Heart right ventricle (tissue), 16 donors: ENCODE measurements at regions of chr20 and their contacts with region 1.

Region 1: DNA sequence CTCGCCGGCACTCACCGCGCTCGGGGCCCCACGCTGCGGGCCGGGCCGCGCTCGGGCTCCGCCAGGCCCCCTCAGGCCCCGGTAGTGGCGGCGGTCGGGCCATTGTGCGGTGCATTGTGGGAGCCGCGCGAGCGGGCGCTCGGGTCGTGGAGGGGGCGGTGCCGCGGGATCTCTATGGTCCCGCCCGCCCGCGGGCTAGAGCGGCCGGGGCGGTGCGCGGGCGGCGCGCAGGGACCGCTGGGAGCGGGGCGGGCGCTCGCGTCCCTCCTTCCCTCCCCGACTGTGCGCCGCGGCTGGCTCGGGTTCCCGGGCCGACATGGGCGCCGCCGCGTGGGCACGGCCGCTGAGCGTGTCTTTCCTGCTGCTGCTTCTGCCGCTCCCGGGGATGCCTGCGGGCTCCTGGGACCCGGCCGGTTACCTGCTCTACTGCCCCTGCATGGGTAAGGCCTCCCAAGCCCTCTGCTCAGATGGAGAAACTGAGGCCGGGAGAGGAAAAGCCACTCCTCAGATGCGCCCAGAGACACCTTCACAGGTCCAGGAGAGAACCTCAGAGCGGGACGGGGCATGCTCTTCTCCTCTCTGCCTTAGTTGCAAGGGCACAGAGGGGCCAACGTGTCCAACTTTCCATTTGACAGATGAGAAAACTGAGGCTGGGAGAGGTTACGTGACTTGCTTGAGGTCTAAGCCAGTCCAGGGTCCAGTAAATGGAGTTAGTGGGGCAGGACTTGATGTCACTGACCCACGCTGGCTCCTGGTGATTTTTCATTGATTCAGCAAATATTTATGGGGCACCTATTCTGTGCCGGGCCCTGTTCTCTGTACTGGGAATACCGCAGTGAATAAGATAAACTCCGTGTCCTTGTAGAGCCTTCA is at the starts of genes PLAGL2 and POFUT1:
- DNase-seq: peak; percentile 90 to 91
- ATAC-seq: peak; percentile 91 to 98 (median 95)
- H3K4me3 ChIP-seq: peak within 1 kb of the TSS; percentile 70 to 100 (median 98)
- H3K27ac ChIP-seq: peak within 1 kb of the TSS; percentile 88 to 99 (median 95)
- H3K4me1 ChIP-seq: peaks cover 22 to 63% (median 52%) of the 10 kb centered on the region in 9 donors
- H3K27me3 ChIP-seq: no peaks in the 10 kb centered on the region
- CTCF ChIP-seq: peak in 5 of 9 donors; percentile 17 to 57 (median 52)
- total RNA-seq, gene PLAGL2: 5.6 to 12.3 (median 7.9) TPM
- total RNA-seq, gene POFUT1: 25.9 to 32.9 (median 27.9) TPM

Region 2: GRCh38 chr20:32109392-32110172 is 98.3 kb before region 1 on chr20 and contains the start of gene TM9SF4:
- intact Hi-C with region 1: loop called in 2 of 10 experiments (anchors 5 to 10 kb)
- DNase-seq: peak; percentile 87 to 95
- ATAC-seq: peak; percentile 93 to 97 (median 96)
- H3K4me3 ChIP-seq: peak within 1 kb of the TSS; percentile 69 to 96 (median 81)
- H3K27ac ChIP-seq: peak within 1 kb of the TSS; percentile 80 to 99 (median 97)
- H3K4me1 ChIP-seq: peaks cover 0 to 47% (median 34%) of the 10 kb centered on the region in 9 donors
- H3K27me3 ChIP-seq: no peaks in the 10 kb centered on the region
- CTCF ChIP-seq: no peak
- total RNA-seq, gene TM9SF4: 27.9 to 36.0 (median 31.6) TPM

Region 3: GRCh38 chr20:32277361-32278198 is 69.7 kb after region 1 on chr20 and contains the start of gene KIF3B:
- intact Hi-C with region 1: loop called in 3 of 10 experiments (anchors 2 to 10 kb)
- DNase-seq: peak; percentile 85 to 93
- ATAC-seq: peak; percentile 92 to 98 (median 96)
- H3K4me3 ChIP-seq: peak within 1 kb of the TSS; percentile 68 to 99 (median 92)
- H3K27ac ChIP-seq: peak within 1 kb of the TSS; percentile 11 to 92 (median 83)
- H3K4me1 ChIP-seq: peaks cover 0 to 29% (median 23%) of the 10 kb centered on the region in 9 donors
- H3K27me3 ChIP-seq: no peaks in the 10 kb centered on the region
- CTCF ChIP-seq: no peak
- total RNA-seq, gene KIF3B: 9.2 to 16.3 (median 11.5) TPM

Region 4: DNA sequence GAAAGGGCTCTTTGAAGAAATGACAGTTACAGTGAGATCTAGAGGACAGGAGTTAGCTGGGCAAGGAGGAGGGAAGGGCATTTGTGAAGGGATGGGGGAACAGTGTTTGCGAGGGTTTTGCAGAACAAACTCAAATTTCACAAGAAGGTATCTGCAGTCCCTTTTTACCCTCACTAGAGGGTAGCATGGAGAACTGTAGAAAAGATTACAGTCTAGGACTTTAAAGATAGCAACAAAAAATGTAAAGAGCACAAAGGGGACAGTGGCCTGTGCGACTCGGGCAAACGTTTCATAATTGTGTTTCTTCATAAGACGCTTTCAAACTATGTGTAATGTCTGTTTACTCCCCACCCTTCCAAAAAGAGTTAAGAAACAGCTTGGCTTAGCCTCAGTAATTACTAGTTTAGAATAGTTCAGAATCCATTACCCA is 129.1 kb after region 1 on chr20:
- intact Hi-C with region 1: loop called in 2 of 10 experiments (anchors 10 kb)
- DNase-seq: no peak
- ATAC-seq: peak in 1 of 8 donors; percentile 27
- H3K4me3 ChIP-seq: no peak overlapping the region
- H3K27ac ChIP-seq: no peak overlapping the region
- H3K4me1 ChIP-seq: peaks cover 0 to 46% (median 36%) of the 10 kb centered on the region in 9 donors
- H3K27me3 ChIP-seq: no peaks in the 10 kb centered on the region
- CTCF ChIP-seq: peak in 8 of 9 donors; percentile 18 to 67 (median 58)

Region 5: GRCh38 chr20:32465092-32465900 is 257.4 kb after region 1 on chr20:
- intact Hi-C with region 1: loop called in 1 of 10 experiments (anchors 10 kb)
- DNase-seq: peak; percentile 67 to 71
- ATAC-seq: peak in 6 of 8 donors; percentile 40 to 76 (median 55)
- H3K4me3 ChIP-seq: no peak overlapping the region
- H3K27ac ChIP-seq: peak overlapping the region in 9 of 10 donors; percentile 38 to 94 (median 62)
- H3K4me1 ChIP-seq: peaks cover 13 to 75% (median 50%) of the 10 kb centered on the region in 9 donors
- H3K27me3 ChIP-seq: no peaks in the 10 kb centered on the region
- CTCF ChIP-seq: no peak